Psoas muscle (tissue), 8 donors: ENCODE measurements at regions of chr9 and their contacts with region 1.

Region 1: DNA sequence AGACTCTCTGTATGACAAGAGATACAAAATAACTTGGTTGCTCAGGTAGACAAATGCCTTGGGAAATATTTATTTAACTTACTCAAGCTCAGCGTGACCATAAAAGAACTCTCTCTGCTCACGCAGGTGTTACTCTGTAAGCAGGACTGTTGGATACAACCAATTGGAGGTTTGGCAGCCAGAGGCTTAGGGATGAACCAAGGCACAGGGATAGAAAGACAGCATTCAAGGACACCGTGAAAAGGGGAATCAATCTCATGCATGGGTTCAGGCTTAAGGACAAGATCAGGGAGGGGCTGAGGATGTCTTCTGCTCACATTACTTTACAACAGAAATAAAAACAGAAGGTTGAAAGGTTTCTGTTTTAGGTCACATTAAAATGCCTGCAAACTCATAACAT is 389.0 kb upstream of the BRINP1 start:
- DNase-seq: no peak
- ATAC-seq: no peak
- H3K4me3 ChIP-seq: no peak overlapping the region
- H3K27ac ChIP-seq: no peak overlapping the region
- H3K4me1 ChIP-seq: no peaks in the 10 kb centered on the region
- H3K27me3 ChIP-seq: peaks cover 0 to 4% (median 0%) of the 10 kb centered on the region in 3 donors
- CTCF ChIP-seq: no peak

Region 2: GRCh38 chr9:119556129-119556875 is 201.9 kb before region 1 on chr9:
- intact Hi-C with region 1: no loop called
- DNase-seq: peak; percentile 69 to 77
- ATAC-seq: peak; percentile 68 to 92 (median 83)
- H3K4me3 ChIP-seq: peak overlapping the region; percentile 43
- H3K27ac ChIP-seq: no peak overlapping the region
- H3K4me1 ChIP-seq: no peaks in the 10 kb centered on the region
- H3K27me3 ChIP-seq: peaks cover 0 to 5% (median 1%) of the 10 kb centered on the region in 3 donors
- CTCF ChIP-seq: peak; percentile 86

Region 3: DNA sequence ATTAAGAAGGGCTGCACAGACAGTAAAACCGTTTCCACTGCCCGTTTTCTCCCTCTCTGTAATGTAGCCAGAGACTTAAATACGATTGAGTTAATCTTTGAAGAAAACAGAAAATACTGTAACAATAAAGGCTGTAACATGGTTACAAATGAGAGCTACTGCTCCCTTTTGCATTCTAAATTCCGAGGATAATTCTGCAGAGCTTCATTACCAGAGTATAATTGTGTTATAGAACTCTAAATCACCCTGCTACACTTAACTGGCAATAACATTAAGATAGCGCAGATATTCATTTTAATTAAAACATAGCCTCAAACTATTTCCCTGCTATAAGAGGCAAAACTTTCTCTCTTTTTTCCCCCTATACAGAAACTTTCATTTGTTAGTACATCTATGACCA is 105.3 kb before region 1 on chr9:
- intact Hi-C with region 1: loop called in 1 of 2 experiments (anchors 10 kb)
- DNase-seq: no peak
- ATAC-seq: no peak
- H3K4me3 ChIP-seq: no peak overlapping the region
- H3K27ac ChIP-seq: no peak overlapping the region
- H3K4me1 ChIP-seq: no peaks in the 10 kb centered on the region
- H3K27me3 ChIP-seq: no peaks in the 10 kb centered on the region
- CTCF ChIP-seq: no peak

Region 4: GRCh38 chr9:119802621-119803020 is 44.4 kb after region 1 on chr9:
- intact Hi-C with region 1: no loop called
- DNase-seq: peak; percentile 75 to 87
- ATAC-seq: peak; percentile 95 to 99 (median 98)
- H3K4me3 ChIP-seq: peak overlapping the region; percentile 10
- H3K27ac ChIP-seq: peak overlapping the region; percentile 85
- H3K4me1 ChIP-seq: peaks cover 22% of the 10 kb centered on the region
- H3K27me3 ChIP-seq: no peaks in the 10 kb centered on the region
- CTCF ChIP-seq: no peak